K562 (cell line): ENCODE measurements at regions of chrX and their contacts with region 1.

Region 1: GRCh38 chrX:2647627-2648026 is 43.5 kb upstream of the CD99 start:
- DNase-seq: no peak
- ATAC-seq: no peak
- H3K4me3 ChIP-seq: no peak overlapping the region
- H3K27ac ChIP-seq: no peak overlapping the region
- H3K4me1 ChIP-seq: no peaks in the 10 kb centered on the region
- H3K27me3 ChIP-seq: no peaks in the 10 kb centered on the region
- CTCF ChIP-seq: no peak
- EP300 ChIP-seq: no peak
- POLR2A ChIP-seq: no peak
- RAD21 ChIP-seq: no peak

Region 2: GRCh38 chrX:2811271-2811670 is 163.6 kb after region 1 on chrX:
- CTCF ChIA-PET with region 1: no interaction called
- POLR2A ChIA-PET with region 1: no interaction called
- in situ Hi-C with region 1: loop called (anchors 5 kb)
- intact Hi-C with region 1: loop called (anchors 1 kb)
- DNase-seq: no peak
- ATAC-seq: no peak
- H3K4me3 ChIP-seq: no peak overlapping the region
- H3K27ac ChIP-seq: no peak overlapping the region
- H3K4me1 ChIP-seq: no peaks in the 10 kb centered on the region
- H3K27me3 ChIP-seq: no peaks in the 10 kb centered on the region
- CTCF ChIP-seq: no peak
- EP300 ChIP-seq: no peak
- POLR2A ChIP-seq: no peak
- RAD21 ChIP-seq: no peak

Region 3: GRCh38 chrX:2974961-2975360 is 327.3 kb after region 1 on chrX:
- CTCF ChIA-PET with region 1: no interaction called
- POLR2A ChIA-PET with region 1: no interaction called
- in situ Hi-C with region 1: no loop called
- intact Hi-C with region 1: no loop called
- DNase-seq: no peak
- ATAC-seq: no peak
- H3K4me3 ChIP-seq: no peak overlapping the region
- H3K27ac ChIP-seq: no peak overlapping the region
- H3K4me1 ChIP-seq: no peaks in the 10 kb centered on the region
- H3K27me3 ChIP-seq: peaks cover 0 to 13% of the 10 kb centered on the region in 2 experiments; a peak in 2 of 5 replicates
- CTCF ChIP-seq: no peak
- EP300 ChIP-seq: no peak
- POLR2A ChIP-seq: no peak
- RAD21 ChIP-seq: no peak